ENCODE measurements at regions of chr18 and their contacts with region 1.

Region 1: DNA sequence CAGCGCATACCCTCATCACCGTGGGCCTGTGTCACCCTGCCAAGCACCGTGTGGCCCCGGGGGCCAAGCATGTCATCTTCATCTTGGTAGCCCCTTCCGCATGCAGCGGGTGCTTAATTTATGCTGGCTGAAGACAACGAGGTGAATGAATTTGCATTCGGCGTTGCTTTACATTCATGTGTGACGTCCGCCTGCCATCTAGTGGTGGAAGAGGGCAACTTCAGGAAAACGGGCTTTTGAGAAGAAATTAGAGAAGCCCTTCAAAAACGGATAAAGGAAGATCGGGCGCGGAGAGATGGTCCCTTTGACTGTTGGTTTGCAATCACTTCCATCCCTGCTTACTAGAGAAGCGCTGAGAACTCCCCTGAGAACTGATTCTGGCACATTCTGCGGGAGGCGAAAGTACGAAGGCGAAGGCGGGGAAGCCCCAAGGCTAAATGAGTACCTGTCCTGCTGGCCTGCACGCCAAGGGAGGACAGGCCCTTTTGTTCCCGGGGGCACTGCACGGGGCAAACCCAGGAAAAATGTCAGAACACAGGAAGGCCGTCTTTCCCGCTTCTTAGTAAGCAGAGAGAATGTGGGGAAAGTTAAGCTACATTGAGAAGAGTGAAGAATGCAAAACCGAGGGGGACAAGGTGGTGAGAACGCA is 145.9 kb downstream of the ZNF516 start:
- DNase-seq: peak in 1 of 2 donors; percentile 56
- ATAC-seq: peak in 2 of 8 donors; percentile 20 to 21
- H3K4me3 ChIP-seq: peak overlapping the region in 3 of 10 donors; percentile 3 to 14 (median 9)
- H3K27ac ChIP-seq: no peak overlapping the region
- H3K4me1 ChIP-seq: peaks cover 0 to 19% (median 7%) of the 10 kb centered on the region in 9 donors
- H3K27me3 ChIP-seq: peaks cover 0 to 5% (median 0%) of the 10 kb centered on the region in 7 donors
- CTCF ChIP-seq: peak; percentile 64 to 90 (median 86)

Region 2: DNA sequence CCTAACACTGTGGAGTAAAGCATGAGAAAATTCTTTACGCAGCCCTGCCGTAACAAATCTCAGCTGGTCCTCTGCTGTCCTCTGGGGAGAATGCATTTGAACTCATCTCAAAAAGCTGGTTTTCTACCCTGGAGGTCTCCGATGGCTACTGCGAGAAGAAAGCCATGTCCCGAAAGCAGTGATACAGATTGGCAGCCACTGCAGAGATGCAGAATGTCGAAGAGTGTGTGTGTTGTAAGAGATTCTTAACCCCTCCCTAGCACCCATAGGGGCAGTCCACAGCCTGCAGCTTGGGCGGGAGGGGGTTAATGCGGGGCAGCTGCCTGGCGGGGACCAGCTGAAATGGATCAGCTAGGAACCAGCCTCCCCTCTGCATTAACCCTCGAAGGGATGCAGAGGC is 90.1 kb before region 1 on chr18:
- intact Hi-C with region 1: loop called in 1 of 10 experiments (anchors 5 kb)
- DNase-seq: no peak
- ATAC-seq: peak in 2 of 8 donors; percentile 16 to 47
- H3K4me3 ChIP-seq: peak overlapping the region in 1 of 10 donors; percentile 3
- H3K27ac ChIP-seq: no peak overlapping the region
- H3K4me1 ChIP-seq: peaks cover 0 to 3% (median 0%) of the 10 kb centered on the region in 9 donors
- H3K27me3 ChIP-seq: peaks cover 0 to 22% (median 5%) of the 10 kb centered on the region in 7 donors
- CTCF ChIP-seq: no peak

Region 3: GRCh38 chr18:76273036-76273545 is 76.1 kb before region 1 on chr18:
- intact Hi-C with region 1: no loop called
- DNase-seq: no peak
- ATAC-seq: no peak
- H3K4me3 ChIP-seq: no peak overlapping the region
- H3K27ac ChIP-seq: no peak overlapping the region
- H3K4me1 ChIP-seq: no peaks in the 10 kb centered on the region
- H3K27me3 ChIP-seq: peaks cover 0 to 14% (median 5%) of the 10 kb centered on the region in 7 donors
- CTCF ChIP-seq: no peak